Mucosa of descending colon (tissue), 3 donors: ENCODE measurements at regions of chr14 and their contacts with region 1.

Region 1: GRCh38 chr14:68307014-68307789 is 485.7 kb downstream of the ZFP36L1 start:
- DNase-seq: peak; percentile 60 to 68 (median 67)
- ATAC-seq: peak; percentile 95
- H3K4me3 ChIP-seq: no peak overlapping the region
- H3K4me1 ChIP-seq: peaks cover 14% of the 10 kb centered on the region
- CTCF ChIP-seq: no peak

Region 2: GRCh38 chr14:68444449-68445168 is 137.4 kb after region 1 on chr14:
- intact Hi-C with region 1: loop called in 1 of 2 experiments (anchors 10 kb)
- DNase-seq: no peak
- ATAC-seq: no peak
- H3K4me3 ChIP-seq: no peak overlapping the region
- H3K4me1 ChIP-seq: no peaks in the 10 kb centered on the region
- CTCF ChIP-seq: no peak

Region 3: GRCh38 chr14:69068744-69069421 is 761.7 kb after region 1 on chr14:
- intact Hi-C with region 1: no loop called
- DNase-seq: no peak
- ATAC-seq: no peak
- H3K4me3 ChIP-seq: no peak overlapping the region
- H3K4me1 ChIP-seq: no peaks in the 10 kb centered on the region
- CTCF ChIP-seq: no peak